ENCODE measurements at regions of chr11 and their contacts with region 1.

Region 1: DNA sequence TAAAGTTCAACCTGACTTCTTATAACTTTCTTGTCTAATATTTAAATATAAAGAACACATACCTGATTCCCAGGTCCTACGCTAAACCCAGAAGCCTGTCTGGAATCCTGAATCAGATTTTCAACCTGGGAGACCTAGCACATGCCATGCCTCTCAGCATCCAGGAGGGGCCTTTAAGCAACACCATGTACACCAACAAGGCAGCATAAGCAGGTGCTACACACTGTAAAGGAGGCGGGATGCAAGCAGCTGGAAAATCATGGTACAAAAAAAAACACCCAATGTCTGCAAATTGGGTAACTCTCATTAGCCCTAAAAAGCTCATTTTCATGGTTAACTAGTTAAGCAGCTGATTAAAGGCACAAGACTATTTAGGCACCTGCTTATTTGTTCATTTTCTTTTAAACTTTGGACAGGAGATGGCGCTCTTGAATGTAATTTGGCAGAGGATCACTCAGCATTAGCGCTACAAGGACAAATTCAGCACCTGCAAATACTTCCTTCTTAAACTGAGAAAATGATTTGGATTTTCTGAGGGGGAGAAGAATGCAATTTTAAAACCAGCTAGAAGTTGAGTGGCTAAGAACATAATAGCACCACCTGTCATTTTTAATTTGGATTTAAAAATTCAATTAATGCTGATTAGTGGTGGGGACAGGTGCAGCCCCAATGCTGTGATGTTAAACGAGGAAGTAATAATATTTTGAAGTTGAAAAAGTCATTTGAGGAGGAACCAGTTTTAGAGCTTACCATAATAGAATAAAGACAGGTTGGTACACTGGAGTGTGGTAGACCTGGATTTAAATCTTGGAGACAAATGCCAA is 104.0 kb downstream of the FAR1 start:
- DNase-seq: no peak
- ATAC-seq: peak; percentile 44

Region 2: DNA sequence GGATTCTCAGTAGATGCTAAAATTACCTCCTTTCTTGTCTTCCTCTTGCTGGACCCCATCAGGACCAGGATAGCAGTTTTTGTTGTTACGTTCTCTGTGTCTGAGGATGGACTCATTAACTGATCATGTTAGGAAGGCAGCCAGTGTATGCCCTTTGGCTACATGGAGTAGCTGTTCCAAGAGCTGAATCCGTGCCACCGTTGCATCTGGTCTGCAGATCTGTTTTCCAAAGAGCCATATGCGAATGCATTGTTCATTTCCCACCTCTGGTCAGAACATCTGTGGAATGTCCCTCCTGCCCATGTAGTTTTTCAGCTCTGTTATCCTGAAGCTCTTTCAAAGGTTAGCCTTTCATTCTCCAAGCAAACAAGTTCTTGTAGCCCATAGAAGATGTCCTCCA is 378.4 kb after region 1 on chr11:
- intact Hi-C with region 1: no loop called
- DNase-seq: no peak
- ATAC-seq: no peak

Region 3: GRCh38 chr11:14258221-14258935 is 485.9 kb after region 1 on chr11:
- intact Hi-C with region 1: loop called (anchors 10 kb)
- DNase-seq: no peak
- ATAC-seq: no peak

Measured in left ventricle myocardium superior (tissue), 1 donor.